Thyroid gland (tissue), 4 donors: ENCODE measurements at regions of chr6 and their contacts with region 1.

Region 1: DNA sequence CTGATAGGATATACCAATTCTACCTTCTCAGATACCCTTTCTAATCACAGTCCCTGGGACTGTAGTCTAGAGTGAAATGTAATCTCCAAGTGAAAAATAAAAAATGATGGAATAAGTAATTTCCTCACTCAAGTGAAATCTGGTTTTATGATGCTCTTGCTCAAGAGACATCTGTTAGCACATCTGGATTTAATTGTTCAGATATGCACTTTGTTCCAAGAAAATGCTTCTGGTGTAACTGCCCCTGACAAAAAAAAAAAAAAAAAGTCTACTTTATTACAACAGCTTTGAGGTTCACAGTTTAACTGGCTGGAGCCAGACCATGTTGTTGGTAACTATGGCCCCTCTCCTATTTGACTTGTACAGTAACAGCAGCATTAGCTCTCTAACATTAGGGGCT is 251.8 kb downstream of the BTBD9 start:
- DNase-seq: no peak
- H3K4me3 ChIP-seq: no peak overlapping the region
- H3K27ac ChIP-seq: no peak overlapping the region
- H3K4me1 ChIP-seq: no peaks in the 10 kb centered on the region
- H3K27me3 ChIP-seq: no peaks in the 10 kb centered on the region
- CTCF ChIP-seq: no peak
- POLR2A ChIP-seq: no peak

Region 2: DNA sequence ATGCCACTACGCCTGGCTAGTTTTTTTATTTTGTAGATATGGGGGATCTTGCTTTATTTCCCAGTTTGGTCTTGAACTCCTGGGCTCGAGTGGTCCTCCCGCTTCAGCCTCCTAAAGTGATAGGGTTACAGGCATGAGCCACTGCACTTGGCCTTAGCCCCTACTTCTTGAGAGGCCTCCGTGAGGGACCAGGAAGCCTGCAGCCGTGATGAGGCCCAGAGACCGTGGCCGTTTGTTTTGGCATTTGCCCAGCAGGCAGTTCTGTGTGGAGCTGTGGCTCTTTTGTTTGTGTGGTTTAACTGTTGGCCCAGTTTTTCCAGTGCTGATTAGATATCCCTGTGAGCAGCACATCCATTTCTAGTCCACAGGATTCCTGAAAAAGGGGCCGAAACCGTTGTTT is 1754.1 kb before region 1 on chr6:
- intact Hi-C with region 1: loop called (anchors 10 kb)
- DNase-seq: peak; percentile 79 to 86
- H3K4me3 ChIP-seq: no peak overlapping the region
- H3K27ac ChIP-seq: no peak overlapping the region
- H3K4me1 ChIP-seq: peaks cover 14 to 20% of the 10 kb centered on the region in 2 donors
- H3K27me3 ChIP-seq: no peaks in the 10 kb centered on the region
- CTCF ChIP-seq: no peak
- POLR2A ChIP-seq: no peak

Region 3: GRCh38 chr6:38198219-38198618 is 189.8 kb before region 1 on chr6:
- intact Hi-C with region 1: no loop called
- DNase-seq: no peak
- H3K4me3 ChIP-seq: no peak overlapping the region
- H3K27ac ChIP-seq: no peak overlapping the region
- H3K4me1 ChIP-seq: peaks cover 16 to 20% of the 10 kb centered on the region in 2 donors
- H3K27me3 ChIP-seq: no peaks in the 10 kb centered on the region
- CTCF ChIP-seq: no peak
- POLR2A ChIP-seq: no peak

Region 4: GRCh38 chr6:38337819-38338465 is 50.0 kb before region 1 on chr6:
- intact Hi-C with region 1: no loop called
- DNase-seq: no peak
- H3K4me3 ChIP-seq: no peak overlapping the region
- H3K27ac ChIP-seq: no peak overlapping the region
- H3K4me1 ChIP-seq: no peaks in the 10 kb centered on the region
- H3K27me3 ChIP-seq: no peaks in the 10 kb centered on the region
- CTCF ChIP-seq: no peak
- POLR2A ChIP-seq: no peak